ENCODE measurements at regions of chr16 and their contacts with region 1.

Region 1: DNA sequence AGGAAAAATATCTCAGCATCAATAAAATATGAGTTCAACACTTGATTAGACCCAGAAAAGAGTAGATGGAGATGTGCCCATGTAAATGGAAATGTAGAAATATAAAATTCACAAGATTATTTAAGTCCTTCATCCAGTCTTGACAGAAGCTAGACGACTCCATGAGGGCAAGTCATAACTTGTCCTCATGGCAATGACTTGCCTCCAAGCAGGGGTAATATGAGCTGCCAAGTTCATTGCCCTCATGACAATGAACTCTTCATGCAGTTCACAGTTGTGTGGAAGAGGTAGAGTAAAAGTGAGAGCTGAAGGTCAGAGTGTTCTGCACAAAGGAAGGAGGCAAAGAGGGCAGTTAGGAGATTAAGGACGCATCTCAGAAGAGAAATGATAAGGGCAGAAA is 22.3 kb downstream of the CDH11 start:
- DNase-seq: no peak
- H3K4me3 ChIP-seq: no peak overlapping the region
- H3K27ac ChIP-seq: no peak overlapping the region
- H3K4me1 ChIP-seq: no peaks in the 10 kb centered on the region
- H3K27me3 ChIP-seq: no peaks in the 10 kb centered on the region
- CTCF ChIP-seq: no peak
- POLR2A ChIP-seq: no peak

Region 2: DNA sequence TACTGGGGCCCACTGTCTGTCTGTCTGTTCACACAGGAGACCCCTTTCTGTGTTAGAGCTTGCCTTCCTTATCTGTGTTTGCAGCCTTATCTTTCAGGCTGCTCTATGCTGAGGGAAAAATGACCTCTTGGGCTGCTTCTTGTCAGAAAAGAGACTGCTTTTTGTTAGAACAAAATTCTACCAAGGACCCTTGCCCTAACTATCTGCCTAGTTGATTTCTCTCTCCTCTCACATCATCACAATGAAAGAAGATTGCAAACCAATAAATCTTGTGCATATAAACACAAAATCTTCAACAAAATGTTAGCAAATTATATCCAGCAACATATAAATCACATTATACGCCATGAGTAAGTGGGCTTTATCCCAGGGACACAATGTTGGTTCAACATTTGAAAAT is 1095.5 kb before region 1 on chr16:
- CTCF ChIA-PET with region 1: no interaction called
- POLR2A ChIA-PET with region 1: no interaction called
- dilution Hi-C with region 1: no loop called
- intact Hi-C with region 1: loop called (anchors 5 kb)
- DNase-seq: no peak
- H3K4me3 ChIP-seq: no peak overlapping the region
- H3K27ac ChIP-seq: no peak overlapping the region
- H3K4me1 ChIP-seq: no peaks in the 10 kb centered on the region
- H3K27me3 ChIP-seq: no peaks in the 10 kb centered on the region
- CTCF ChIP-seq: no peak
- POLR2A ChIP-seq: no peak

Region 3: DNA sequence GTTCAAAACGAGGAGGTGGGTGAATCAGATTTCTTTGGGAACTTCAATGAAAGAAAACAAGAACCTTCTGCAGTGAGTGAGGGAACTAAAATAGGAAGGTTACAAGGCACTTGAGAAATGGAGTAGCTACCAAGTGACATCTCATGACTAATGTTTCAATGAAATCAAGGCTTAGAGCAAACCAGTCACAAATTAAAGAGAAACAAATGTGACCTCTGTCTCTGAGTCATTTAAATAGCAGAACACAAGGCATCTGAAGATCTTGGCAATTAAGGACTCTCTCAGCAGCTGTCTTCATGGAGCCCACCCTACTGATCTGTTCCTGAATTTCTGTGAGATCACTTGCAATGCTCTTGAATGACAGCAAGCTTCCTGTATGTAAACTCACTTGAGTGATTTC is 87.2 kb before region 1 on chr16:
- CTCF ChIA-PET with region 1: no interaction called
- POLR2A ChIA-PET with region 1: no interaction called
- dilution Hi-C with region 1: no loop called
- intact Hi-C with region 1: no loop called
- DNase-seq: peak; percentile 11
- H3K4me3 ChIP-seq: no peak overlapping the region
- H3K27ac ChIP-seq: no peak overlapping the region
- H3K4me1 ChIP-seq: no peaks in the 10 kb centered on the region
- H3K27me3 ChIP-seq: no peaks in the 10 kb centered on the region
- CTCF ChIP-seq: no peak
- POLR2A ChIP-seq: no peak

Measured in endothelial cell of umbilical vein (primary cell).